Cardiac septum (tissue), 1 donor: ENCODE measurements at regions of chr1 and their contacts with region 1.

Region 1: DNA sequence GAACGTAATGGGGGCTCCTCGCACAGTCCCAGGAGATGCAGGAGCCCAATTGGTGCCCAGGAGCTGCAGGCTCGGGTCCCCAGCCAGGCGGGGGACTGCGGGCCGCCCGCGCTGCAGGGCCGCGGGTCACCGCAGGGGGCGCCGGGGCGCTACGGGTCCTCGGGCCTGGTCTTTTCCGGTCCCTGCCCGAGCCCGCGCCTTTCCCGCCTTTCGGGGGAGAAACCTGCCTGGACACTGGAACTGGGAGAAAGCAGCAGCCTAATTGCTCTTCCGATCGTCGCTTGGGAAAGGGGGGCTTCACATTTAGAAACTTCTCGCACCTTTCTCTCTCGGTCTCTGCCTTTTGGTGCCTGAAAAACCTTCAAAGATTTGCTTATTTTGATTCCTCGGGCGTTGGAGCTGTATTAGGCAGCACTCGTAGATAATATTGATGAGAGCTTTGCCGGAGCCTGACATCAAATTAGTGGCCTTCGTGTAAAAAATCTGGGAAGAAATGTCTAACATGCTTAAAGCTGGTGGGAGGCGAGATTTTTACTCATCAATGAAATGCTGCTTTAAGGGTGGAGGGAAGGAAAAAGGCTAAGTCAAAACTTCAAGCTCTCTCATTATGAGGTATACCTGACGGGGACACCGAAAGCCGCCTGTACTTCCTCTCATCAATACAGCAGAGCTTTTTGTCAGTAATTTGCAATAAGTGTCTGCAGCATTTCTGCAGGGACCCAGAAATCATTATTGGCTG is 12.6 kb upstream of the BARHL2 start:
- DNase-seq: no peak

Region 2: GRCh38 chr1:90534663-90535295 is 194.9 kb before region 1 on chr1:
- intact Hi-C with region 1: no loop called
- DNase-seq: no peak

Region 3: GRCh38 chr1:90671741-90672140 is 57.9 kb before region 1 on chr1:
- intact Hi-C with region 1: no loop called
- DNase-seq: no peak

Region 4: DNA sequence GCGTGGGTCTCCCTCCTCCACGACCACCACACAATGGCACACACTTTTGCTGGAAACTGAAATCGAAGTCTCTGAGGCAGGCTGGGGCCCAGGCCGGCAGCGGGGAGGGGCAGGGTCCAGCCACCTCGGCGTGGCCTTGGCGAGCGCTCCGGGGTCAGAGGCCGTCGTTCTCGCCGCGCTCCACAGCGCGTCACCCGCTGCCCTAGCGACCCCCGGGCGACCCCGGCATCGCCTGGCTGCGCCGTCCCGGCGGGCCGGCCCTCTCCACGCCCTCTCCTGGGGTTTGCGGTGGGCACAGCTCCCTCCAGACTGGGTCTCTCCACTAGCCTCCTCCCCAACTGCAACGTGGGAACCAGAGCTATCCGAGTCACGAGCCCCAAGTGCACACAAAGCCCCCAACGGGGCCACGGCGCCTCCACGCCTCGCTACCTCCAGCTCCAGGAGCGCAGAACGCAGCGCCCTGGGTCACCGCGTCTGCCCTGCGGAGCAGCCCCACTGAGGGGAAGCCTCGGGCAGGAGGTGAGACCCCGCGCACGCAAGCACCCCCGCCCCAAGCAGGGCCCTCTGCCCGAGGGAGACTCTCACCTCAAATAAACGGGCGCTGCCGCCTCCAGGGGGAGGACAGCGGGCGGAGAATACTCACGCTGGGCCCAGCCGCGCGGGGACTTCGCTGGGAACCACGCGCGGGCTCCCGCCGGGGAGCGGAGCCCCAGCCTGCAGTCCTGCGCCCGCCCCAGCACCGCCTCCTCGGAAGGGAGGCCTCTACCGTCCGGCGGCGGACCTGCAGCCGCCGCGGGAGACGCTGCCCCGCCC is 121.4 kb after region 1 on chr1:
- intact Hi-C with region 1: loop called (anchors 5 kb)
- DNase-seq: peak; percentile 91